HCT116 (cell line): ENCODE measurements at regions of chr12 and their contacts with region 1.

Region 1: GRCh38 chr12:10331642-10332239 is 24.1 kb downstream of the KLRD1 start:
- DNase-seq: peak; percentile 56
- ATAC-seq: peak; percentile 98
- H3K4me3 ChIP-seq: no peak overlapping the region
- H3K27ac ChIP-seq: no peak overlapping the region
- H3K4me1 ChIP-seq: peaks cover 0 to 3% of the 10 kb centered on the region in 2 experiments; a peak in 1 of 4 replicates
- H3K27me3 ChIP-seq: no peaks in the 10 kb centered on the region
- CTCF ChIP-seq: peak; percentile 81 to 95 (median 83)
- POLR2A ChIP-seq: no peak
- RAD21 ChIP-seq: peak; percentile 94

Region 2: GRCh38 chr12:10364815-10365622 is 33.3 kb after region 1 on chr12:
- CTCF ChIA-PET with region 1: interaction called, 11 read pairs
- POLR2A ChIA-PET with region 1: interaction called, 3 read pairs
- RAD21 ChIA-PET with region 1: no interaction called
- intact Hi-C with region 1: no loop called
- DNase-seq: peak; percentile 71
- ATAC-seq: peak; percentile 56
- H3K4me3 ChIP-seq: peak overlapping the region; percentile 71 to 74
- H3K27ac ChIP-seq: peak overlapping the region; percentile 89
- H3K4me1 ChIP-seq: peaks cover 37 to 52% of the 10 kb centered on the region in 2 experiments; a peak in 3 of 4 replicates
- H3K27me3 ChIP-seq: no peaks in the 10 kb centered on the region
- CTCF ChIP-seq: no peak
- POLR2A ChIP-seq: no peak
- RAD21 ChIP-seq: no peak

Region 3: DNA sequence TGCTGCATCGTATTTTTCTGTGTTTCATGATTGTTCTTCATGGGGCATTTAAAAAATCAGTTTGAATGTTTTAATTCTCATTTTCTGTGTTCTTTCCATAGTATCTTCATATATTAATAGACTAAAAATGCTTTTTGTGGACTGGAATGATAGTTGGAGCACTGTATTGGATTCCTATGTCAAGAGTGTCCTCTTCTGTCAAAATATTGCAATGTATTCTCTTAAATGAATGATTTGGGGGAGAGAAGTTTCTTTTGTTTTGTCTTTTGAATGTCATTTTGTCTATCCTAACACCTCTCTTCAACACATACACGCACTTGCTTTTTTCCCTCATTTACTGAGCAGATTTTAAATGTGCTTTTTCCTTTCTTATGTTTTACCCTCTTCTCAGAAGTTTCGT is 169.3 kb after region 1 on chr12:
- CTCF ChIA-PET with region 1: no interaction called
- POLR2A ChIA-PET with region 1: no interaction called
- RAD21 ChIA-PET with region 1: no interaction called
- intact Hi-C with region 1: loop called (anchors 1 kb)
- DNase-seq: peak; percentile 2
- ATAC-seq: no peak
- H3K4me3 ChIP-seq: no peak overlapping the region
- H3K27ac ChIP-seq: no peak overlapping the region
- H3K4me1 ChIP-seq: no peaks in the 10 kb centered on the region
- H3K27me3 ChIP-seq: no peaks in the 10 kb centered on the region
- CTCF ChIP-seq: peak in 2 of 3 experiments; percentile 33 to 60; a peak in 3 of 6 replicates
- POLR2A ChIP-seq: no peak
- RAD21 ChIP-seq: peak; percentile 80